Caco-2 (cell line): ENCODE measurements at regions of chr1 and their contacts with region 1.

Region 1: GRCh38 chr1:145706086-145706680 is 985 bp downstream of the PDZK1 start:
- DNase-seq: peak; percentile 48 to 72
- H3K4me3 ChIP-seq: peak overlapping the region; percentile 51
- H3K4me3 Mint-ChIP-seq: peak overlapping the region; percentile 60
- H3K27ac Mint-ChIP-seq: peak overlapping the region; percentile 83
- H3K4me1 ChIP-seq: peaks cover 62% of the 10 kb centered on the region
- H3K4me1 Mint-ChIP-seq: peaks cover 29% of the 10 kb centered on the region
- H3K27me3 ChIP-seq: no peaks in the 10 kb centered on the region
- H3K27me3 Mint-ChIP-seq: no peaks in the 10 kb centered on the region
- CTCF ChIP-seq: no peak

Region 2: GRCh38 chr1:145720877-145721671 is 14.9 kb after region 1 on chr1:
- CTCF ChIA-PET with region 1: interaction called, 13 read pairs
- POLR2A ChIA-PET with region 1: interaction called, 5 read pairs
- intact Hi-C with region 1: loop called (anchors 1 kb)
- DNase-seq: peak; percentile 68 to 81
- H3K4me3 ChIP-seq: peak overlapping the region; percentile 23
- H3K4me3 Mint-ChIP-seq: peak overlapping the region; percentile 66
- H3K27ac Mint-ChIP-seq: peak overlapping the region; percentile 69
- H3K4me1 ChIP-seq: peaks cover 28% of the 10 kb centered on the region
- H3K4me1 Mint-ChIP-seq: peaks cover 38% of the 10 kb centered on the region
- H3K27me3 ChIP-seq: no peaks in the 10 kb centered on the region
- H3K27me3 Mint-ChIP-seq: no peaks in the 10 kb centered on the region
- CTCF ChIP-seq: peak; percentile 84 to 96